Activated B cell treated with CpG ODN at 0.5 μM for 24 hours (primary cell): ENCODE measurements at regions of chr3 and their contacts with region 1.

Region 1: DNA sequence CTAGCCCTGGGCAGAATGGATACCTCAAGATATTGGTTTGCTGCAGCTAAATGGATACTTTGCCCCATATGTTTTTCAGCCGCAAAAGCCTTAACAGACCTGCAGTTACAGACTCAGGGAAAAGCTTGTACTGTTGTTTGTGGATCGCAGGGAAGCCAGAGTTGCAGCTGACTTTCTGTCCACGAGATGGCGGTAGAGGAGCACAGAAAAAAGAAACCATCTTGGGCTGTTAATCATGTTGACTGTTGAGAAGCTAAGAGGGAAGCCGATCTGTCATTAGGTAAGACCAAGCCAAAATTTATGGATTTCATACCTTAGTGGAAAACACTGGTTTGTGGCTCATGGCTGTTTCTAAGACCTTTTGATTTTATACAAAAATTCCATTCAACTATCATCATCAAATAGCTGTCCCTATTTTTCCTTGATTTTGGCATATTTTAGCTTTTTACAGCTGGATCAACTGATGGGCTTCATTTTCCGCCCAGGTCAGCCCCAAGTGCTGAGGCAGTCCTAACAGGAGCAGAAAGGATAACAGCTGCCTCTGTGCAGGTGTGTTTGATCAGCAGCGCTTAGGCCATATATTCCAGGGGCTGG is 205.7 kb upstream of the ZPLD1 start:
- DNase-seq: peak; percentile 62
- ATAC-seq: peak; percentile 56
- H3K4me3 Mint-ChIP-seq: no peak overlapping the region
- H3K27ac Mint-ChIP-seq: no peak overlapping the region
- H3K4me1 Mint-ChIP-seq: peaks cover 54% of the 10 kb centered on the region
- H3K27me3 Mint-ChIP-seq: no peaks in the 10 kb centered on the region
- CTCF ChIP-seq: no peak

Region 2: DNA sequence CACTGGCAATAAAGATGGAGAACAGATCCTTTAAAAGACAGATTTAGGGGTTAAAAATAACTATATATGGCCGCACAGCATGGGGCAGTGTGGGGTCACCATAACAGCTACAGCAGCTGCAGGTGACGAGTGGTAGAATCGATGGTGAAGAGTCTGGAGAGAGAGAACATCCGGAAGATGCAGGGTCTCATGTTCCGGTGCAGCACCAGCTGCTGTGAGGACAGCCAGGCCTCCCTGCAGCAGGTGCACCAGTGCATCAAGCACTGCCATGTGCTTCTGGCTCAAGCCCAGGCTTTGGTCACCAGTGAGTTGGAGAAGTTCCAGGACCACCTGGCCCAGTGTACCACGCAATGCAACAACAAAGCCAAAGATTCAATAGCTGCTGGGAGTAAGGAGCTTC is 815.0 kb before region 1 on chr3:
- CTCF ChIA-PET with region 1: no interaction called
- POLR2A ChIA-PET with region 1: no interaction called
- intact Hi-C with region 1: no loop called
- DNase-seq: no peak
- ATAC-seq: no peak
- H3K4me3 Mint-ChIP-seq: no peak overlapping the region
- H3K27ac Mint-ChIP-seq: no peak overlapping the region
- H3K4me1 Mint-ChIP-seq: peaks cover 1% of the 10 kb centered on the region
- H3K27me3 Mint-ChIP-seq: no peaks in the 10 kb centered on the region
- CTCF ChIP-seq: no peak

Region 3: DNA sequence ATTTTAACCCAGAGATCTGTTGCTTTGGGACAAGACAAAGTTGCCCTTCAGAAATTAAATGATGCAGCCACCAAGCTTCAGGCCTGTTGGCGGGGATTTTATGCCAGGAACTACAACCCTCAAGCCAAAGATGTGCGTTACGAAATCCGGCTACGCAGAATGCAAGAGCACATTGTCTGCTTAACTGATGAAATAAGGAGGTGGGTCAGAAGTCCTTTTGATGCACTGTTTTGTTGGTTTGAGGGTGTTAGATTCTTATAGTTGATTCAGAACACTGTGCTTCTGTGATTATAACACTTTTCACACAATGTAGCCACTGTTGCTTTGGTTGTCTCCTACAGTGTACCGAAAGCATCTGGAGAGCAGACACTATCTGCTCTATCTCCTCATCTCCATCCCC is 470.9 kb before region 1 on chr3:
- CTCF ChIA-PET with region 1: no interaction called
- POLR2A ChIA-PET with region 1: no interaction called
- intact Hi-C with region 1: no loop called
- DNase-seq: no peak
- ATAC-seq: no peak
- H3K4me3 Mint-ChIP-seq: no peak overlapping the region
- H3K27ac Mint-ChIP-seq: no peak overlapping the region
- H3K4me1 Mint-ChIP-seq: peaks cover 4% of the 10 kb centered on the region
- H3K27me3 Mint-ChIP-seq: no peaks in the 10 kb centered on the region
- CTCF ChIP-seq: no peak

Region 4: DNA sequence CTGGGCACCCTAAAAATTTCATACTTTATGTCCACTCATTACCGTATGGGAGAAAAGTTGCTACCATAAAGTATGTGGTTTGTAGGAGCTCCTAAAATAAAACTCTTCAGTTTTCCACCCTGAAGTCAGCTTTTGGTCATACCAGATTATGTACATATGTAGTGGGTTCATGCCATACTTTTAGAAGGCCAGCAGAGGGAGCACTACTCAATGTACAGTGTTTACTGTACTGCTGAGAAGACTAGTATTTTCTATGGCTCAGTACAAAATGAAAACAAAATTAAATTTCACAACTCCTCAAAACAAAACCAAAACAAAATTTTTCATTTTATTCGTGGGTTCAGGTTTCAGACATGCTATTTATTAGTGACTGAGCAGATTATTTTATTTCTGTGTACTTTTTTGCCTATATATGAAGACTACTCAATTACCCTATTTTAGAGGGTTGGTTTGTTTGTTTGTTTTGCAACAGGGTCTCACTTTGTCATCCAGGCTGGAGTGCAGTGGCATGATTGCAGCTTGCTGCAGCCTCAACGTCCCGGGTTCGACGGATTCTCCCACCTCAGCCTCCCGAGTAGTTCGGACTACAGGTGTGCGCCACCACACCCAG is 425.9 kb before region 1 on chr3:
- CTCF ChIA-PET with region 1: interaction called, 847 read pairs
- POLR2A ChIA-PET with region 1: interaction called, 9 read pairs
- intact Hi-C with region 1: no loop called
- DNase-seq: no peak
- ATAC-seq: peak; percentile 100
- H3K4me3 Mint-ChIP-seq: no peak overlapping the region
- H3K27ac Mint-ChIP-seq: no peak overlapping the region
- H3K4me1 Mint-ChIP-seq: peaks cover 7% of the 10 kb centered on the region
- H3K27me3 Mint-ChIP-seq: no peaks in the 10 kb centered on the region
- CTCF ChIP-seq: no peak

Region 5: GRCh38 chr3:101849051-101849720 is 380.0 kb before region 1 on chr3 and contains the start of gene NFKBIZ:
- CTCF ChIA-PET with region 1: interaction called, 37 read pairs
- POLR2A ChIA-PET with region 1: interaction called, 26 read pairs
- intact Hi-C with region 1: loop called (anchors 1 kb)
- DNase-seq: peak; percentile 87
- ATAC-seq: peak; percentile 82
- H3K4me3 Mint-ChIP-seq: peak within 1 kb of the TSS; percentile 98
- H3K27ac Mint-ChIP-seq: peak within 1 kb of the TSS; percentile 96
- H3K4me1 Mint-ChIP-seq: peaks cover 63% of the 10 kb centered on the region
- H3K27me3 Mint-ChIP-seq: no peaks in the 10 kb centered on the region
- CTCF ChIP-seq: no peak
- total RNA-seq, gene NFKBIZ: 391 and 421 TPM in 2 replicates

Region 6: GRCh38 chr3:101995371-101996046 is 233.7 kb before region 1 on chr3:
- CTCF ChIA-PET with region 1: interaction called, 35 read pairs
- POLR2A ChIA-PET with region 1: interaction called, 24 read pairs
- intact Hi-C with region 1: loop called (anchors 2 kb)
- DNase-seq: no peak
- ATAC-seq: no peak
- H3K4me3 Mint-ChIP-seq: peak overlapping the region; percentile 5
- H3K27ac Mint-ChIP-seq: peak overlapping the region; percentile 78
- H3K4me1 Mint-ChIP-seq: peaks cover 68% of the 10 kb centered on the region
- H3K27me3 Mint-ChIP-seq: no peaks in the 10 kb centered on the region
- CTCF ChIP-seq: no peak

Region 7: DNA sequence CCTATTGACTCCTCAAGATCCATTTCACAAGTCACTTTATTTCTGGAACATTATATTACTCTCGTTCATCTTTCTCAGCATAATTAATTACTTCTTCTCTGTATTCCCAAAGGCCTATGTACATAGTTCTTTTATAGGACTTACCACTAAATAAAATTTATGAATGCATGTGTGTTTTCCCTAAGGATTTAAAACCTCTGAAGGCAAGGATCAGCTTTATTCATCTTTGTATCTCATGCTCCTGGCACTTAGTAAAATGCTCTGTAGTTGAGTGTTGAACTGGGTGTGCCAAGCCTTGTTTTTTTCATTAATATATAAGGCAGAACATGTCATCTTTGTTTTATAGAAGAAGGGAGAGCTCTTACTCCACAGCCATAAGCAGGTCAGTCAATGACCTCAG is 11.6 kb after region 1 on chr3:
- CTCF ChIA-PET with region 1: interaction called, 14 read pairs
- POLR2A ChIA-PET with region 1: no interaction called
- intact Hi-C with region 1: no loop called
- DNase-seq: no peak
- ATAC-seq: no peak
- H3K4me3 Mint-ChIP-seq: no peak overlapping the region
- H3K27ac Mint-ChIP-seq: no peak overlapping the region
- H3K4me1 Mint-ChIP-seq: peaks cover 12% of the 10 kb centered on the region
- H3K27me3 Mint-ChIP-seq: no peaks in the 10 kb centered on the region
- CTCF ChIP-seq: no peak

Region 8: GRCh38 chr3:102374863-102375634 is 145.9 kb after region 1 on chr3:
- CTCF ChIA-PET with region 1: no interaction called
- POLR2A ChIA-PET with region 1: no interaction called
- intact Hi-C with region 1: no loop called
- DNase-seq: no peak
- ATAC-seq: no peak
- H3K4me3 Mint-ChIP-seq: no peak overlapping the region
- H3K27ac Mint-ChIP-seq: no peak overlapping the region
- H3K4me1 Mint-ChIP-seq: no peaks in the 10 kb centered on the region
- H3K27me3 Mint-ChIP-seq: peaks cover 5% of the 10 kb centered on the region
- CTCF ChIP-seq: no peak

Region 9: GRCh38 chr3:102741108-102741507 is 511.9 kb after region 1 on chr3:
- CTCF ChIA-PET with region 1: interaction called, 3 read pairs
- POLR2A ChIA-PET with region 1: interaction called, 4 read pairs
- intact Hi-C with region 1: loop called (anchors 2 kb)
- DNase-seq: no peak
- ATAC-seq: no peak
- H3K4me3 Mint-ChIP-seq: no peak overlapping the region
- H3K27ac Mint-ChIP-seq: no peak overlapping the region
- H3K4me1 Mint-ChIP-seq: no peaks in the 10 kb centered on the region
- H3K27me3 Mint-ChIP-seq: peaks cover 1% of the 10 kb centered on the region
- CTCF ChIP-seq: no peak